ENCODE measurements at regions of chr4 and their contacts with region 1.

Region 1: DNA sequence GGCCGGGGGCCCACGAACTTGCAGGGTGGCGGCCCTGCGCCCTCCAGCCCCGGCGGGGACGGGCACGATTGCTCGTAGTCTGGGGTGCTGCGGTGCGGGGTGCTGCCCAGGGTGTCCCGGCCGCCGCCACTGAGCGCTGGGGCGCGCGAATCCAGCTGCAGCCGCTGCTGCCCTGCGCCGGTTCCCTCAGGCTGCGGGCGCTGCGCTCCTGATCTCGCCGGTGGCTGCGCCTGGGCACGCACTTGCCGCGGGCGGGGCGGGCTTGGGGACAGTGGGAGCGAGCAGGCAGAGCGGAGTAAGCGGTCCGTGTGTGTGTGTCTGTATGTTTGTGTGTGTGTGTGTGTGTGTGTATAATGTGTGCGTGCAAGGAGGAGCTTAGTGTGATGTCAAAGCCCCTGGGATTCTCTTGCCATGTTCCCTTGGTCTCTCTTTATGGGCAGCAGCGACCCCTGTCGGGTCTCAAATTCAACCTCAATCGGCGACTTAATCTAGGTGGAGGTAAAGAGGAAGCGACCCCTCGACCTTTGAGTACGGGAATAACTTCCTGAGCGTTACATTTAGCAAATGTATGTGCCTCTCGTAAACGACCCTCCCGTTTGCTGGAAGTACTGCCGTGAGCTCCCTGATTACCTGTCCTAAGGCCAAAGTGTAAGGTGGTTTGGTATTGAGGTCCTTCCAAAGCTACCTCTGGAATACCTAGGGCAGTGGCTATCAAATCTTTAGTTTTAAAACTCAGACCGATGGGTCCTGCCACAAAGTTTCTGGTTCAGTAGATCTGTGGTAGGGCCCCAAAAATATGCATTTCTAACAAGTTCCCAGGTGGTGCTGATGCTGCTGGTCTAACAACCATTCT is at the start of gene RNF150:
- DNase-seq: peak; percentile 60 to 89 (median 82)
- H3K4me3 ChIP-seq: peak within 1 kb of the TSS; percentile 54 to 95 (median 81)
- H3K27ac ChIP-seq: peak within 1 kb of the TSS in 55 of 59 donors; percentile 15 to 93 (median 79)
- H3K27me3 ChIP-seq: peaks cover 0 to 15% (median 0%) of the 10 kb centered on the region in 45 donors
- CTCF ChIP-seq: peak; percentile 48 to 82 (median 69)
- total RNA-seq, gene RNF150: 11.8 to 47.7 (median 28.5) TPM

Region 2: GRCh38 chr4:140861359-140862176 is 271.8 kb before region 1 on chr4:
- intact Hi-C with region 1: loop called (anchors 1 to 2 kb)
- DNase-seq: peak in 7 of 10 donors; percentile 38 to 90 (median 62)
- H3K4me3 ChIP-seq: no peak overlapping the region
- H3K27ac ChIP-seq: no peak overlapping the region
- H3K27me3 ChIP-seq: no peaks in the 10 kb centered on the region
- CTCF ChIP-seq: peak; percentile 69 to 94 (median 82)

Region 3: GRCh38 chr4:140928880-140929279 is 204.5 kb before region 1 on chr4:
- intact Hi-C with region 1: loop called in 1 of 2 experiments (anchors 5 kb)
- DNase-seq: peak in 1 of 10 donors; percentile 38
- H3K4me3 ChIP-seq: no peak overlapping the region
- H3K27ac ChIP-seq: no peak overlapping the region
- H3K27me3 ChIP-seq: no peaks in the 10 kb centered on the region
- CTCF ChIP-seq: no peak

Region 4: GRCh38 chr4:141410839-141411238 is 277.5 kb after region 1 on chr4:
- intact Hi-C with region 1: no loop called
- DNase-seq: no peak
- H3K4me3 ChIP-seq: no peak overlapping the region
- H3K27ac ChIP-seq: no peak overlapping the region
- H3K27me3 ChIP-seq: no peaks in the 10 kb centered on the region
- CTCF ChIP-seq: no peak